Panc1 (cell line): ENCODE measurements at regions of chr1 and their contacts with region 1.

Region 1: GRCh38 chr1:28668191-28668955 is at the start of gene GMEB1:
- DNase-seq: peak; percentile 42
- ATAC-seq: peak; percentile 95
- H3K4me3 ChIP-seq: peak within 1 kb of the TSS; percentile 74 to 95
- H3K27ac ChIP-seq: peak within 1 kb of the TSS; percentile 100
- H3K4me1 ChIP-seq: peaks cover 13% of the 10 kb centered on the region
- H3K27me3 ChIP-seq: no peaks in the 10 kb centered on the region
- CTCF ChIP-seq: no peak
- total RNA-seq, gene GMEB1: 13.8 TPM

Region 2: GRCh38 chr1:28139025-28139712 is 529.2 kb before region 1 on chr1:
- CTCF ChIA-PET with region 1: no interaction called
- POLR2A ChIA-PET with region 1: no interaction called
- in situ Hi-C with region 1: no loop called
- intact Hi-C with region 1: no loop called
- DNase-seq: no peak
- ATAC-seq: no peak
- H3K4me3 ChIP-seq: no peak overlapping the region
- H3K27ac ChIP-seq: no peak overlapping the region
- H3K4me1 ChIP-seq: no peaks in the 10 kb centered on the region
- H3K27me3 ChIP-seq: no peaks in the 10 kb centered on the region
- CTCF ChIP-seq: no peak

Region 3: GRCh38 chr1:28552758-28553663 is 115.4 kb before region 1 on chr1 and contains the start of gene TRNAU1AP:
- CTCF ChIA-PET with region 1: no interaction called
- POLR2A ChIA-PET with region 1: interaction called, 11 read pairs
- in situ Hi-C with region 1: no loop called
- intact Hi-C with region 1: no loop called
- DNase-seq: peak; percentile 88
- ATAC-seq: peak; percentile 98
- H3K4me3 ChIP-seq: peak within 1 kb of the TSS; percentile 90 to 98
- H3K27ac ChIP-seq: peak within 1 kb of the TSS; percentile 97
- H3K4me1 ChIP-seq: no peaks in the 10 kb centered on the region
- H3K27me3 ChIP-seq: no peaks in the 10 kb centered on the region
- CTCF ChIP-seq: no peak
- total RNA-seq, gene TRNAU1AP: 39.1 TPM

Region 4: DNA sequence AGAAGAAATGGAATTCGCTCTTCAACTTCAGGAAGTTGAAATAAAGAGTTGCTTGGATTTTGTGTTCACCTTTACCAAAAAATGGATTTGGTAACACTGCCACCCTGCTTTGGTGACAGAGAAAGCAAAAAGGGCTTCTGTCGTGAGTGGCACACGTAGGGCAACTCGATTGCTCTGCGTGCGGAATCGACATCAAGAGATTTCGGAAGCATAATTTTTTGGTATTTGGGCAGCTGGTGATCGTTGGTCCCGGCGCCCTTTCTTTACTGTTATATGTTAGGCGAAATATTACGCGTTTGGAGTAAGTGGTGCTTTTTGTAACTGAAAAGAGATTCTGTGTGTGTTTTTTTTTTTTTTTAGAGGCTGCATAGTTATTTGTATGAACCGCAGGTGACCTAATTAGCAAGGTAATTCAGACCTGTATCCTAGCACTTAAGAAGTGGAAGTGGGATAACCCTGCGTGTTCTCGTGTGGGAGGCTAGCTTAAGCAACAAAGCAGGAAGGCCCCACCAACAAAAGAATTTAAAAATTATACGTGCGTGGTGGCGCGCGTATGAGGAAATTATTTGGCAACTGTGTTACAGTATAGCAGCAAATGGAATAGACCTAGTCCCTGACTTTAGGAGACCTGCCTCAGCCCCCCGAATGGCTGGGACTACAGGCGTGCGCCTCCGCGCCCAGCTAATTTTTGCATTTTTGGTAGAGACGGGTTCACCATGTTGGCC is 19.7 kb before region 1 on chr1 and contains the start of gene RNU11:
- CTCF ChIA-PET with region 1: no interaction called
- POLR2A ChIA-PET with region 1: interaction called, 12 read pairs
- in situ Hi-C with region 1: no loop called
- intact Hi-C with region 1: no loop called
- DNase-seq: peak; percentile 98
- ATAC-seq: peak; percentile 89
- H3K4me3 ChIP-seq: peak within 1 kb of the TSS; percentile 32 to 57
- H3K27ac ChIP-seq: peak within 1 kb of the TSS; percentile 99
- H3K4me1 ChIP-seq: peaks cover 4% of the 10 kb centered on the region; the same call in 1 of the 2 replicates
- H3K27me3 ChIP-seq: no peaks in the 10 kb centered on the region
- CTCF ChIP-seq: no peak
- total RNA-seq, gene RNU11: not detected

Region 5: DNA sequence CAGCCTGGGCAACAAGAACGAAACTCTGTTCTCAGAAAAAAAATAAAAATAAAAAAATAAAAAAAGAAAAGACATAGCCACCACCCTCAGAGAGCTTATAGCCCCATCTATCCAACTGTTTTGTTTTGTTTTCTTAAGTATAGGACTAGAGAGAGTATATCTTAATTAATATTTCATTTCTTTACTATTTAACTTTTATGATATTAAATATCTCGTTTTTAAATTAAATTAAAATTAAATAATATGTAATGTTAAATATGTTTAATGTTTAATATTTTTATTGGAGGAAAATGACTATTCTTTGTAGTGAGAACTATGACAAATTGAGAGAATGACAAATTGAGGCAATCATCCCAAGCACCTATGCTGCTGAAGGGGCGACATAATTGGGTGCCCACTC is 35.3 kb after region 1 on chr1:
- CTCF ChIA-PET with region 1: interaction called, 10 read pairs
- POLR2A ChIA-PET with region 1: no interaction called
- in situ Hi-C with region 1: no loop called
- intact Hi-C with region 1: no loop called
- DNase-seq: no peak
- ATAC-seq: no peak
- H3K4me3 ChIP-seq: no peak overlapping the region
- H3K27ac ChIP-seq: no peak overlapping the region
- H3K4me1 ChIP-seq: no peaks in the 10 kb centered on the region
- H3K27me3 ChIP-seq: no peaks in the 10 kb centered on the region
- CTCF ChIP-seq: no peak

Region 6: GRCh38 chr1:28736450-28737306 is 68.3 kb after region 1 on chr1 and contains the start of gene YTHDF2:
- CTCF ChIA-PET with region 1: interaction called, 15 read pairs
- POLR2A ChIA-PET with region 1: interaction called, 11 read pairs
- in situ Hi-C with region 1: no loop called
- intact Hi-C with region 1: no loop called
- DNase-seq: peak; percentile 61
- ATAC-seq: peak; percentile 97
- H3K4me3 ChIP-seq: peak within 1 kb of the TSS; percentile 94 to 95
- H3K27ac ChIP-seq: peak within 1 kb of the TSS; percentile 98
- H3K4me1 ChIP-seq: peaks cover 26% of the 10 kb centered on the region
- H3K27me3 ChIP-seq: no peaks in the 10 kb centered on the region
- CTCF ChIP-seq: peak; percentile 98
- total RNA-seq, gene YTHDF2: 97.3 TPM